ENCODE measurements at regions of chr14 and their contacts with region 1.

Region 1: GRCh38 chr14:50311975-50312733 is at the starts of genes DMAC2L and L2HGDH:
- DNase-seq: peak; percentile 93
- ATAC-seq: peak; percentile 95
- H3K4me3 Mint-ChIP-seq: peak within 1 kb of the TSS; percentile 85
- H3K27ac Mint-ChIP-seq: peak within 1 kb of the TSS; percentile 95
- H3K4me1 Mint-ChIP-seq: peaks cover 41% of the 10 kb centered on the region
- H3K27me3 Mint-ChIP-seq: no peaks in the 10 kb centered on the region
- total RNA-seq, gene DMAC2L: 7.4 to 12.6 TPM
- total RNA-seq, gene L2HGDH: 12.8 to 19.0 TPM

Region 2: DNA sequence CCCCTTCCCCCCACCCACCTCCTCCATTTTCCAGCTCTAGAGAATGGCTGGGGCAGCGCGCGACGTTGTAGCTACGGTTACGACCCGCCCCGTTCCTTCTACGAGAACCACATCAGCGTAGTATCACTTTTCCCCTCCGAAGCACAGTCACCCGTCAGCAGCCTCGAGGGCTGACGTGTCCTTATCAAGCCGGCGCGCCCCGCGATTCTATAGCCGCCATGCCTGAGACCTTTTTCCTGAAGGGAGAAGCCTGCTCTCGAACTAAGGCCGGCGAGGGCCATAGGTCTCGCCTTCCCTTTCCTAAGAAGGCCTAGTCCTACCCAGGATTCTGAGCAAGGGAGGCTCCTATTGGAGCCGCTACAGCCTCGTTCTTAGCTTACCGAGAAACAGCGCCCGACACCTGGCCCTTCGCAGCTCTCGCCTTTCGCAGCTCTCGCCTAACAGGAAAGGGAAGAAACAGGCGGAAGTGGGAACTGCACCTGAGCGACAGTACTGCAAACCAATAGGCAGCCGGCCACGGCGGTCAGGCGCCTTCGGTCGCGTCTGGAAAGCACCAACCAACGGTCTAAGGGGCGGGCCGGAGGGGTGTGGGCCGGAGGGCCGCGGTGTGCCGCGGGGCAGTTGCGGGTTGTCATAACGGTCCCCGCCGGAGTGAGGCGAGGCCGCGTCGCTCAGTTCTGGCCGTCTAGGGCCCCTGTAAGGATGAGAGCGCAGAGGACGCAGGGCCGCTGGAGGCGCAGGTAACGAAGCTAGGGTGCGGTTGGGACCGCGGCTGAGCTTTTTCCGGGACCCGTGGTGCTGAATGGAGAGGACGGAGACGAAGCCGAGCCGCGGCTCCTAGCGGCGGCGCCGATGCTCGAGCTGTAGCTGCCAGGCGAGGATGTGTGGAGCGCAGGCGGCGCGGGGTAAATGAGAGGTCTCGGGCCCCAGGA is 691.7 kb before region 1 on chr14 and contains the starts of genes MGAT2 and RPL36AL:
- CTCF ChIA-PET with region 1: no interaction called
- POLR2A ChIA-PET with region 1: no interaction called
- intact Hi-C with region 1: loop called in 1 of 2 experiments (anchors 1 kb)
- DNase-seq: peak; percentile 97
- ATAC-seq: peak; percentile 90
- H3K4me3 Mint-ChIP-seq: peak within 1 kb of the TSS; percentile 93
- H3K27ac Mint-ChIP-seq: peak within 1 kb of the TSS; percentile 97
- H3K4me1 Mint-ChIP-seq: peaks cover 51% of the 10 kb centered on the region
- H3K27me3 Mint-ChIP-seq: no peaks in the 10 kb centered on the region
- total RNA-seq, gene MGAT2: 23.8 to 32.2 TPM
- total RNA-seq, gene RPL36AL: 272 to 309 TPM

Region 3: GRCh38 chr14:49852301-49853157 is 459.6 kb before region 1 on chr14 and contains the start of gene NEMF:
- CTCF ChIA-PET with region 1: no interaction called
- POLR2A ChIA-PET with region 1: interaction called, 3 read pairs
- intact Hi-C with region 1: loop called in 1 of 2 experiments (anchors 2 kb)
- DNase-seq: peak; percentile 86
- ATAC-seq: peak; percentile 79
- H3K4me3 Mint-ChIP-seq: peak within 1 kb of the TSS; percentile 97
- H3K27ac Mint-ChIP-seq: peak within 1 kb of the TSS; percentile 98
- H3K4me1 Mint-ChIP-seq: peaks cover 39% of the 10 kb centered on the region
- H3K27me3 Mint-ChIP-seq: no peaks in the 10 kb centered on the region
- total RNA-seq, gene NEMF: 62.4 to 97.9 TPM

Region 4: GRCh38 chr14:50038398-50039119 is 273.6 kb before region 1 on chr14:
- CTCF ChIA-PET with region 1: no interaction called
- POLR2A ChIA-PET with region 1: interaction called, 4 read pairs
- intact Hi-C with region 1: loop called in 1 of 2 experiments (anchors 2 kb)
- DNase-seq: peak; percentile 88
- ATAC-seq: peak; percentile 82
- H3K4me3 Mint-ChIP-seq: peak overlapping the region; percentile 75
- H3K27ac Mint-ChIP-seq: peak overlapping the region; percentile 99
- H3K4me1 Mint-ChIP-seq: peaks cover 66% of the 10 kb centered on the region
- H3K27me3 Mint-ChIP-seq: no peaks in the 10 kb centered on the region

Region 5: DNA sequence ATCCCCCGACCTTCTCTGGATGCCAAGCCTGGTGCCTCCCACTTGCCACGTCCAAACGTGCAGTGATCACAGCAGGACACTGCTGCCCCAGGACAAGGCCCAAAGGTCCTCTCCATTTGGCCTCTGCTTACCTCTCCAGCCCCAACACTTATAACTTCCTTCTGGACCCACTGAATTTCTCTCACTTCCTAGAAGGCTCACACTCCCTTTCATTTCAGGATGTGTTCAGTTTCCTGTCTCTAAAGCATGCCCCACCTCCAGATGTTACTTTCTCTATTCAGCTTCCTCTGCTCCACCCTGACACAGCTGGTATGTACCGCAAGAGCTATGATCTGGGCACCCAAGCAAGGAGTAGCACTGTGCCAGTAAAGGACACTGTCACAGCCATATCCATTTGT is 51.6 kb after region 1 on chr14:
- CTCF ChIA-PET with region 1: interaction called, 3 read pairs
- POLR2A ChIA-PET with region 1: interaction called, 3 read pairs
- intact Hi-C with region 1: loop called in 1 of 2 experiments (anchors 2 kb)
- DNase-seq: peak; percentile 66
- ATAC-seq: peak; percentile 96
- H3K4me3 Mint-ChIP-seq: peak overlapping the region; percentile 82
- H3K27ac Mint-ChIP-seq: peak overlapping the region; percentile 94
- H3K4me1 Mint-ChIP-seq: peaks cover 20% of the 10 kb centered on the region
- H3K27me3 Mint-ChIP-seq: no peaks in the 10 kb centered on the region

Region 6: GRCh38 chr14:50667996-50668825 is 356.1 kb after region 1 on chr14 and contains the start of gene SAV1:
- CTCF ChIA-PET with region 1: no interaction called
- POLR2A ChIA-PET with region 1: no interaction called
- intact Hi-C with region 1: loop called in 1 of 2 experiments (anchors 1 kb)
- DNase-seq: peak; percentile 71
- ATAC-seq: peak; percentile 79
- H3K4me3 Mint-ChIP-seq: no peak within 1 kb of the TSS
- H3K27ac Mint-ChIP-seq: peak within 1 kb of the TSS; percentile 80
- H3K4me1 Mint-ChIP-seq: peaks cover 12% of the 10 kb centered on the region
- H3K27me3 Mint-ChIP-seq: no peaks in the 10 kb centered on the region
- total RNA-seq, gene SAV1: 13.6 TPM